Panc1 (cell line): ENCODE measurements at regions of chr2 and their contacts with region 1.

Region 1: GRCh38 chr2:42747422-42747821 is 16.5 kb downstream of the OXER1 start:
- DNase-seq: no peak
- ATAC-seq: no peak
- H3K4me3 ChIP-seq: no peak overlapping the region
- H3K27ac ChIP-seq: no peak overlapping the region
- H3K4me1 ChIP-seq: no peaks in the 10 kb centered on the region
- H3K27me3 ChIP-seq: no peaks in the 10 kb centered on the region
- CTCF ChIP-seq: no peak

Region 2: DNA sequence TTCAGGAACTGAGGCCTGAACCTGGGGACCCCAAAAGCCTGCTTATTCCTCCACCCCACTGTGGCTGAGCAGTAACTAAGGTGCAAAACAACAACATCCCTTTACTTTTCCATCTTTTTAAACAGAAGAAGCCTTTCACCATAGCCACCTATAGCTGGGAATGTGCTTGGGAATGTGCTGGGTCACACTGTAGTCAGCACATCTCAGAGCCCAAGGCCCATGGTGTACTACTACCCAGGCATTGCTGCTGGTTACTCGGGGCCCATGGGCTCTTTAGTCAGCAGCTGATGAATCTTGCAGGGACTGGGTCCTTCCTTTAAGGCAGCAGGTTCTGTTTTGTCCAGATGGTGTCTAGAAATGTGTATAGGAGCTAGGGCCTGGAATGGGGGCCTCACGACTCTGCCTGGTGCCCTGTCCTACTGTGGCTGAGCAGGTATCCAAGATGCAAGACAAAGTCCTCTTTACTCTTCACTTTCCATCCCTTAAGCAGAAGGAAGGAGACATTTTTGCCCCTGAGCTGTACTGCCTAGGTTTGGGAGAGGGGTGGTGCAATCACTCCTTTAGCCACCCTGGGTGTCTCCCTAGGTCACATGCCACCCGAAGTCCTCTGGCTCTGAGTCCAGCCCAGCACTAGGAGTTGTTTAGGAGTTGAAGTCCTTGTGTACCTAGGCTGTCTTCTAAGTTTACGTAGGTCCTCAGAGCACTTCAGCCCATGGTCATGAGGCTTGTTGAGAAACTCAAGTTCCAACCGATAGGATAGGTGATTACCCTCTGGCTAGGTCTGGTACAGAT is 53.5 kb before region 1 on chr2:
- CTCF ChIA-PET with region 1: no interaction called
- POLR2A ChIA-PET with region 1: interaction called, 10 read pairs
- in situ Hi-C with region 1: no loop called
- intact Hi-C with region 1: no loop called
- DNase-seq: no peak
- ATAC-seq: no peak
- H3K4me3 ChIP-seq: no peak overlapping the region
- H3K27ac ChIP-seq: no peak overlapping the region
- H3K4me1 ChIP-seq: no peaks in the 10 kb centered on the region
- H3K27me3 ChIP-seq: no peaks in the 10 kb centered on the region
- CTCF ChIP-seq: no peak